ENCODE measurements at regions of chr7 and their contacts with region 1.

Region 1: DNA sequence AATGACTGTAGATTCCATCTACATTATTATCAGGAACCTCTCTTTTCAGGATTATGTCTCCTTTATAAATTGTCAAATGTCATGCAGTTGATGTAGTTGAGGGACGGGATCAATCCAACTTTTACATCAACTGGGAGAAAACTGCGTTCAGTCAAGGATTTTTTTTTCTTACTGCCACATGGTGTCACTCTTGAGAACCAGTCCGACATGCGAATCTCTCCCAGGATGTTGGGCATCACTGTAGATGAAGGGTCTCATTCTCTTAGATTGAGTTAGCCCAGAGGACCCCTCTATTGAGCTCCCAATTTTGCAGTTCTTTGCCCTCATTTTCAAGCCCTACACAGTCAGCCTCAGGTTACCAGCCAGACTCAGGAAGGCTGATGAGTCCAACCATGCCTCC is 120.3 kb upstream of the PTPRZ1 start:
- DNase-seq: peak; percentile 9
- H3K4me3 ChIP-seq: no peak overlapping the region
- H3K27ac ChIP-seq: no peak overlapping the region
- H3K4me1 ChIP-seq: no peaks in the 10 kb centered on the region
- CTCF ChIP-seq: peak; percentile 68

Region 2: DNA sequence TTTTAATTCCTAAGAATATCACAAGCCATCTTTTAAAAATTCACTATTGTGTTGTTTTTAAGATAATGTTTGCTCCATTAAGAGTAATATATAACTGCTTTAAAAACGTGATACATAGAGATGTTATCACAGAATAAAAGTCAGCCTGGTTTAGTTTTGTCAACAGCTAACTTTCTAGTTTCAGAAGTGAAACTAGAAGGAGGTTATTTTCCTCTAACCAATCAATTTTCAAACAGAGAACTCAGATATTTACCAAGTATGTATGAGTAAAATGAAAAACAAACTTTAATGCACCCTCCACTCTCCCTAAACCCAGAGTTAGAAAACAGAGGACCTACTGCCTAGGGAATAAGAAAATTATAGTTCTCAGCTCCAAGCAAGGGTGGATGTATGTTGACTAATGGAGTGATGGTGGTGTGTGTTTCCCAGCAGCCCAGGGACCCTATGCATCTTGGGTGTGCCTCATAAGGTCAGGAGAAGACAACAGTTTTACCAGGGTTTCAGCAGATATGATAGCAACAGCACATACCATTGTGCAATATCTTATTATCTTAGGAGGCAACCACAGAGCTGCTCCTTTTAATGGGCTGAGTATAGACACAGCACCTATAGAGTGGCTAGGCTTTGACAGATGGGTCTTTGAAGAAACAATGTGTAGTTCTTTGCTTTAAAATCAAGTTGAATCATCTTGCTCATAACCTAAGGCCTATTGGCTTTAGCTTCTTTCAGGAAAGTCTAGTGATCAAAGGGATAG is 178.6 kb after region 1 on chr7:
- CTCF ChIA-PET with region 1: no interaction called
- POLR2A ChIA-PET with region 1: no interaction called
- intact Hi-C with region 1: no loop called
- DNase-seq: no peak
- H3K4me3 ChIP-seq: no peak overlapping the region
- H3K27ac ChIP-seq: no peak overlapping the region
- H3K4me1 ChIP-seq: no peaks in the 10 kb centered on the region
- CTCF ChIP-seq: no peak

Region 3: DNA sequence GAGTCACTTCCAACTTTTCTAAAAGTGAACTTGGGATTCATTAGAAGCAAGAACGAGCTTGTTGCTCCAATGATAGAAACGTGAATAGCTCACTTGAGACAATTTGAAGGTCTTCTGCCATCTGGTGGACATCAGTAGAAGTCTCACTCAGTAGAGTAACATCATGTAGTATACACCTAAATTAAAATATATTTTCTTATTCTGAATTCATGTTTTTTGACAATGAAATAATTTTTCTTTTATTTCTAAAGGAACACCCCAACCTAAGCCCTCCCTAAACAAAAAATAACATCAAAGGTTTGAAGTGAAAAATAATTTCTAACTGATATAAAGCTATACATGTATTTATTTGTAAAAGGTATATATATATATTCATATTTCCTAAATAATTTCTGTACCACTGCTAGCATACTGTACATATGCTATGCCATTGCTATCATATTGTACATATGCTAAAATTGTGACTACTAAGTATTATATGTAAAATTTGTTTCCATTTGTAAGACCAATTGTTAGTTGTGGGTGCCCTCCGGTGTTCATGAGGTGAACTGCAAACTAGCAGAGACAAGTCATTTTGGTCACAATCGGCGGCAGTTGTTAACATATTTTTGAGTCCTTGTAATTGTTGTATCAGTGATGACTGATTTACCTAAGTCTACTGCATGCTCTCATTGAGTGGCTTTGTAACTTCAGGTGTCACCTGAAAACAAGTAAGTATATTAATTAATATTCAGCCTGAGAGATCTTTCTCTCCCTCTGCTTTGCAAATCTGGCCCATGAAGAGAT is 242.1 kb after region 1 on chr7:
- CTCF ChIA-PET with region 1: interaction called, 3 read pairs
- POLR2A ChIA-PET with region 1: no interaction called
- intact Hi-C with region 1: loop called (anchors 2 kb)
- DNase-seq: peak; percentile 60
- H3K4me3 ChIP-seq: no peak overlapping the region
- H3K27ac ChIP-seq: no peak overlapping the region
- H3K4me1 ChIP-seq: no peaks in the 10 kb centered on the region
- CTCF ChIP-seq: peak; percentile 84